ENCODE measurements at regions of chr20 and their contacts with region 1.

Region 1: DNA sequence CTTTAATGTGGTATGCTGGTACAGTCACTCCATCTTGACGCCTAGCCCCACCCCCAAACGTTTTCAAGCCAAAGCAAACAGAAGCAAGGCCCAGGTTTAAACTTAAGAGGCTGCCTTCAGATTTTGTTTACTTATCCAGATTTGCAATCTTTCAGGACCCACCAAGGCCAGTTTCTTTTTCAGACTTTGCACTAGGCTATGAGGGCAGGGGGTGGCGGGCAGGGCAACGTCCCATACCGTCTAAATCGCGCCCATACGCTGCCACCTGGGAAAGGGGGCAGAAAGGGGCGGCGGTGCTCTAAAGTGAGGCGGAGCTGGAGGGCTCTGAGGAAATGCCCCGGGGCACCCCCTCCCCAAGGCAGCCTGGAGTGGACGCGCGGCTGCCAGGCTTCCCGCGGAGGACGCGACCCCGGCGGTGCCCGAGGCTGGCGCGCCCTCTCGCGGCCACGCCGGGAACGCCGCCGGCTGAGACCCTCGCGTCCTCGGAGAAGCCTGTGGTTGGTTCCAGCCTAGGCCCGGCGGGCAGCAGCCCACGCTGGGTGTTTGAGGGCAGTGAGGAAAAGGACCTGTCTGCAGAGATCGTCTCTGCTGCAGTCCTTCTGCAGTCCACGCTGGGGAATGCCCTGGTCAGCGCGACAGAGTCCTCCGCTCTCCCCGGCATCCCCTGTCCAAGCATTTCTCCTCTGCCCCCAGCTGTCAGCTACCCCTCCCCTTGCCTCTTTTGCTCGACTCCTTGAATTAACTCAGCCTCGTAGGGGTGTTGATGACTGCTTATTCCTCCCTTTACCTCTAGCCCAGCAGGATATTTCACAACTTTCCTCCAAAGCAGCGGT is 129.2 kb upstream of the PRND start:
- DNase-seq: no peak
- H3K4me3 ChIP-seq: peak overlapping the region; percentile 19 to 63 (median 37)
- H3K27ac ChIP-seq: no peak overlapping the region
- H3K4me1 ChIP-seq: peaks cover 8 to 11% (median 9%) of the 10 kb centered on the region in 3 donors
- H3K27me3 ChIP-seq: peaks cover 0 to 40% (median 0%) of the 10 kb centered on the region in 4 donors
- CTCF ChIP-seq: peak; percentile 75 to 93 (median 80)
- POLR2A ChIP-seq: no peak

Region 2: GRCh38 chr20:4112481-4113421 is 479.8 kb before region 1 on chr20:
- intact Hi-C with region 1: loop called (anchors 5 kb)
- DNase-seq: no peak
- H3K4me3 ChIP-seq: no peak overlapping the region
- H3K27ac ChIP-seq: peak overlapping the region in 1 of 4 donors; percentile 9
- H3K4me1 ChIP-seq: peaks cover 0 to 19% (median 7%) of the 10 kb centered on the region in 3 donors
- H3K27me3 ChIP-seq: peaks cover 0 to 41% (median 0%) of the 10 kb centered on the region in 4 donors
- CTCF ChIP-seq: no peak
- POLR2A ChIP-seq: no peak

Region 3: DNA sequence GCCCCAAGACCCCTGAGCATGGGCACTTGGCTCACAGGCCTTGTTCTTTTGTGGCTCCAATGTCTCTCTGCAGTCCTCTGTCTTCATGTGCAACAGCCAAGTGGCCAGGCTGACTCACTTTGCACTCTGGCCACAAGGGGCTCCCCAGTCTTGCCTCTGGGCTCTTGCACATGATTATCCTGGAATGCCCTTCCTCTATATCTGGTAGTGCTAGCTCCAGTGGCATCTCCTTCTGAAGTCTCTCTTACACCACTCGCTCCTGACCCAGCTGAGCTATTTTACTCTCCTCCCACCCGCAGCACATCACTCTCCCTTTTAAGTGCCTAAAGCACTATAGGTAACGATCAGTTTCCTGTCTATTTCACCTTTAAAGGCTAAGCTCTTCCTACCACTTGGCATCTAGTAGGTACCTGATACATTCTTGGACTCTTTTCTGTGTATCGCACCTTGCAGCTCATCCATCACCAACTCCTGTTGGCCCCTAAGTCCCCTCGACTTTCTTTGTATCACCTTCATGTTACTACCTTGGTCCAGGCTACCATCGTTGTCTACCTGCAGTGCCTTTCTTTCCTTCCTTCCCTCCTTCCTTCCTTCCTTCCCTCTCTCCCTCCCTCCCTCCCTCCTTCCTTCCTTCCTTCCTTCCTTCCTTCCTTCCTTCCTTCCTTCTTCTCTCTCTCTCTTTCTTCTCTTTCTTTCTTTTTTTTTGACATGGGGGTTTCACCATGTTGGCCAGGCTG is 365.3 kb before region 1 on chr20:
- intact Hi-C with region 1: loop called (anchors 5 kb)
- DNase-seq: no peak
- H3K4me3 ChIP-seq: no peak overlapping the region
- H3K27ac ChIP-seq: no peak overlapping the region
- H3K4me1 ChIP-seq: peaks cover 0 to under 1% (median 0%) of the 10 kb centered on the region in 3 donors
- H3K27me3 ChIP-seq: peaks cover 0 to 38% (median 0%) of the 10 kb centered on the region in 4 donors
- CTCF ChIP-seq: peak in 1 of 6 experiments; percentile 38
- POLR2A ChIP-seq: no peak

Measured in esophagus squamous epithelium (tissue), 5 donors.